AG04450 (cell line): ENCODE measurements at regions of chr15 and their contacts with region 1.

Region 1: DNA sequence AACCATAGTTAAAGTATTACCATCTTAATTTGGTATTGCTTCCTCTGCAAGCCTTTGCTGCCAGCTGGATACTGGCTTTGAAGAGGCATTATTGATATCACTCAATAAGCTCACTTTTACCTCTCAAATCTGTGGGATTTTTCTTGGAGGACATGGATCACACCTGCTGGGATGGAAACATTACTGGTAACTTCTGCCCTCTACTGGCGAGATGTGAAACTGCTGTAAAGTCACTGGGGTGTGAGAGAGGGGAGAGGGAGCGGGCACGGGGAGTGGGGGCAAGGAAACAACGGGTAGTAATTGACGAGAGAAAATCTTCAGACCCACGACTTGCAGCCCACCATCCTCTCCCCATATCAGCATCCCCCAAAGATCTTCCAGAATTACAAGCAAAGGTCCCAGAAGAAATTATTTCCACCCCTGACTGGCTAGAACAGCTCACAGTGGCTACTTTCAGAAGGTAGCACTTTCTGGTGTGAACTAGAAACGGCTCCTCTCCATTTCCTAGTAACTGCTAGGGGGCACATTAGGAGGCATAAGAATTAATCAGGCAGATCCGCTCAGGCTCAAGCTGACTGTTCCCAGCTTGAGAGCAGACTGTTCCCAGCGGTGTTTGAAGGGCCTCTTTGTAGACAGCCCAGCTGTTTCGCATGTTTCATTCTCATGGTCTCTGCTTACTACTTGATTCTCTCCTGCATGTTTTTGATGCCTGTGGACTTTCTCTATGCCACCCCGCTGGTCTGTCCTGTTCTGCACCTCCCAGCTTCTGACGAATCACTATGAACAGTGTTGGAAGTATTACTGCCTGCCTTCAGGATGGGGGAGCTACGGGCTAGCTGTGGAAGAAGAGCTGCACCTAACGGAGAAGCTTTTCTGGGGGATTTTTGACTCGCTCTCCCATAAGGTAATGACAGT is 230.4 kb upstream of the CHRM5 start:
- DNase-seq: no peak
- H3K4me3 ChIP-seq: no peak overlapping the region
- H3K27ac ChIP-seq: no peak overlapping the region
- H3K27me3 ChIP-seq: peaks cover 18% of the 10 kb centered on the region
- CTCF ChIP-seq: peak; percentile 88

Region 2: DNA sequence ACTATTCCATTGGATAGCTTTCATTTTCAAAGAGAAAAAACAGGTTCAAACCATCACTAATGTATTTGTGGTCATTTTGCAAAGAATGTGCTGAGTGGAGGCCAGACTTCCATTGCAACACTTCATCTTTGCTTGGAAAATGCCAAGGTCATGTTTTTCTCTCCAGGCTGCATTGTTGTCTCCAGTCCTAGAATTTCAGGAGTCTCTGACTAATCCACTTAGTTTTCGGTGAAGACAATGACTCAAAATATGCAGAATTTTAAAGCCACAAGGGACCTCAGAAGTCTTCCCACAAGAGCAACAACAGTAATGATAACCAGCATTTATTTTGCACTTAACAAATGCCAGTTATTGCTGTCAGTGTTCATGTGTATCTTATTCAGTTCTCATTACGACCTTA is 150.2 kb before region 1 on chr15:
- CTCF ChIA-PET with region 1: no interaction called
- POLR2A ChIA-PET with region 1: no interaction called
- DNase-seq: no peak
- H3K4me3 ChIP-seq: no peak overlapping the region
- H3K27ac ChIP-seq: no peak overlapping the region
- H3K27me3 ChIP-seq: peaks cover 4% of the 10 kb centered on the region
- CTCF ChIP-seq: no peak

Region 3: DNA sequence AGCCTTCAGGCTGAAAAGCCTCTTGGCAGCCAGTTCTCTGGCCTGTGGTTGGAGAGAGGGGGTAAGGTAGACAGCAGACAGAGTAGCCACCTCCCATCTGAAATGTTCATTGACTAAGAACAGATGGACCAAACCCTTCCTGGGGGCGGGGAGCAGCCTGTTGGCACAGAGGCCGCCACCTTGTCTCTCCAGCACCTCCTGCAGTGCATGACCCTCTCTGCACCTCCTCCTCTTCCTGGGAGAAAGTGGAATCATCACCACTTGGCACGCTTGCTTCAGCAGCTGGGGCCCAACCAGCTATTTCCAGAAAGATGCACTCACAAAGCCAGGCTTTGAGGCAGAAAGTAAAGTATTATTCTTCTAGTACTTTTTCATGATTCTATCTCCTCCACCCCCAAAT is 83.1 kb before region 1 on chr15:
- CTCF ChIA-PET with region 1: no interaction called
- POLR2A ChIA-PET with region 1: no interaction called
- DNase-seq: no peak
- H3K4me3 ChIP-seq: no peak overlapping the region
- H3K27ac ChIP-seq: no peak overlapping the region
- H3K27me3 ChIP-seq: no peaks in the 10 kb centered on the region
- CTCF ChIP-seq: no peak

Region 4: DNA sequence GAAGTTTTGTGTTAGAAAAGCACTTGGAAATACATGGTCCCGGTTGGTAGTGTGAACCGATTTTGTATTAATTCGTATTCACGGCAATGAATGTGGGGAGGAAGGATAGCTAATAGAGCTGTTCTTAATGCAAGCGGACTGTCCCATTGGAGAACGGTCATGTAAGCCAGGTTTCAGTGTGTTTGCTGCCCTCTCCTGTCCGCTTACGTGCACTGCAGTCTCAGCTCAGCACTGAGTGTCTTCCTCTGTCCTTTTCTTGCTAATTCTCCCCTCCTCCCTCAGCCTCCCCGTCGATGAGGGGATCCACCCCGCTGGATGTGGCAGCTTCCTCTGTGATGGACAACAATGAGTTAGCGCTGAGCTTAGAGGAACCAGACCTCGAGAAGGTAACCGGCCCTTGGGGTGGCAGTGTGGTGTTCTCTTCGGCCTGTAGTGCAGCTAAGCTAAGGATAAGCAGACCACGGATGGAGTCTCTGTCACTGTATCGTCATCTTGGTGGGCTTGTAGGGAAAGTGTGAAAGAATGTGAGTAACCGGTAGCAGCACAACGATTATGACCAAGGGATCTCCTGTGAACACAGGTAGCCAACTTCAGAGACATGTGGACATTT is 37.1 kb before region 1 on chr15:
- CTCF ChIA-PET with region 1: interaction called, 10 read pairs
- POLR2A ChIA-PET with region 1: no interaction called
- DNase-seq: peak; percentile 68
- H3K4me3 ChIP-seq: no peak overlapping the region
- H3K27ac ChIP-seq: no peak overlapping the region
- H3K27me3 ChIP-seq: peaks cover 8% of the 10 kb centered on the region
- CTCF ChIP-seq: peak; percentile 95

Region 5: DNA sequence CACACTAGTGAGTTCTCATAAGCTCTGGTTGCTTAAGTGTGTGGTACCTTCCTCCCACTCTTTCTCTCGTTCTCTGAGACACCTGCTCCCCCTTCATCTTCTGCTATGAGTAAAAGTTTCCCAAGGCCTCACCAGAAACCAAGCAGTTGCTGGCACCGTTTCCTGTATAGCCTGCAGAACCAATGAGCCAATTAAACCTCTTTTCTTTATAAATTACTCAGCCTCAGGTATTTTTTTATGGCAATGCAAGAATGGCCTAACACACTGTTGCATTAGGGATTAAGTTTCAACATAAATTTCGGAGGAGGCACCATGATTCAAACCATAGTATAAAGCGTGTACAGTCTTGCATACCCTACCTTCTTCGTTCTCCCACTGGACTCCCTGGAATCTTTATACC is 21.9 kb before region 1 on chr15:
- CTCF ChIA-PET with region 1: interaction called, 28 read pairs
- POLR2A ChIA-PET with region 1: no interaction called
- DNase-seq: no peak
- H3K4me3 ChIP-seq: no peak overlapping the region
- H3K27ac ChIP-seq: no peak overlapping the region
- H3K27me3 ChIP-seq: no peaks in the 10 kb centered on the region
- CTCF ChIP-seq: no peak

Region 6: DNA sequence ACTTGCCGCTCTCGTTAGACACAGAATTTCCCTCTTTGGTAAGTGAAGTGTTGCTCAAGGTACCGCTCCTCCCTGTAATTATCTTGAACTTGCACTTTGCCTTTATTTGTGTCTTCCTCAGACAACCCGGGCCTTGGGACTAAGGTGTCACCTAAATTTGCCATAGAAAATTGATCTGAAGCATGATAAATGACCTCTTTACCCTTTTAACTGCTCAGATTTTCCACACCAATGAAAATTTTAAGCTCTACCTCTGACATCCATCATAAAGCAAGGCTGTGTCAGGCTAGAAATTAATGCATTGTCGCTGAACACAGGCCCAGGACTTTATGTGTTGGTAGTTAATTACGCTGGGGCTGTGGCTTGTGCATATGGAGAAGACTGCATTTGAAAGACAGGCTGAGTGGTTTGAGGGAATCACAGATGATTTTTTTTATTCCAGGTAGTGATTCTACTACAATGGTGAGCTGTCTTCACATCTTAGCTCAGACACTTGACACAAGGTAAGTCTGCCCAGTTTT is 30.8 kb after region 1 on chr15:
- CTCF ChIA-PET with region 1: interaction called, 11 read pairs
- POLR2A ChIA-PET with region 1: no interaction called
- DNase-seq: no peak
- H3K4me3 ChIP-seq: no peak overlapping the region
- H3K27ac ChIP-seq: no peak overlapping the region
- H3K27me3 ChIP-seq: peaks cover 4% of the 10 kb centered on the region
- CTCF ChIP-seq: no peak

Region 7: GRCh38 chr15:33975022-33975565 is 237.2 kb after region 1 on chr15:
- CTCF ChIA-PET with region 1: interaction called, 53 read pairs
- POLR2A ChIA-PET with region 1: no interaction called
- DNase-seq: no peak
- H3K4me3 ChIP-seq: no peak overlapping the region
- H3K27ac ChIP-seq: no peak overlapping the region
- H3K27me3 ChIP-seq: no peaks in the 10 kb centered on the region
- CTCF ChIP-seq: 0 out of 2 replicates have a peak, but pooled peaks have one; percentile 19